ENCODE measurements at regions of chr16 and their contacts with region 1.

Region 1: GRCh38 chr16:13919683-13920509 is at the start of gene ERCC4:
- DNase-seq: peak; percentile 97 to 99
- H3K4me3 ChIP-seq: peak within 1 kb of the TSS; percentile 85
- H3K4me1 ChIP-seq: peaks cover 15% of the 10 kb centered on the region
- H3K27me3 ChIP-seq: no peaks in the 10 kb centered on the region

Region 2: DNA sequence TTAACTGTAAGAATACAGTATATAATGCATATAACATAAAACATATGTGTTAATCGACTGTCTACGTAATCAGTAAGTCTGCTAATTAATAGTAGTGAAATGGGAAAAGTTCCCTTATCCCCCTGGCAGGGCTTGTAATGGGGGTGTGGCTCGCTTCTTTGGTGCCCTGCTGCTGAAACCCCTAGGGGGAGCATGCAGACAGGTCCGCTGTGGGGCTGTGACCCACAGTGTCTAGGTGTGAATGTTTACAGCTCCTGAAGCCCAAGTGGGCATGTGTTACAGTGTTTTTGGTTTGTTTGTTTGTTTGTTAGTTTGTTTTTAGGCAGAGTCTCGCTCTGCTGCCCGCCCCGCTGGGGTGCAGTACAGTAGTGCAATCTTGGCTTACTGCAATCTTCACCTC is 522.8 kb before region 1 on chr16:
- in situ Hi-C with region 1: no loop called
- DNase-seq: no peak
- H3K4me3 ChIP-seq: no peak overlapping the region
- H3K4me1 ChIP-seq: no peaks in the 10 kb centered on the region
- H3K27me3 ChIP-seq: no peaks in the 10 kb centered on the region

Region 3: GRCh38 chr16:14289706-14290353 is 369.9 kb after region 1 on chr16:
- in situ Hi-C with region 1: loop called (anchors 5 kb)
- DNase-seq: peak; percentile 41 to 60
- H3K4me3 ChIP-seq: no peak overlapping the region
- H3K4me1 ChIP-seq: peaks cover 6% of the 10 kb centered on the region
- H3K27me3 ChIP-seq: no peaks in the 10 kb centered on the region

Region 4: DNA sequence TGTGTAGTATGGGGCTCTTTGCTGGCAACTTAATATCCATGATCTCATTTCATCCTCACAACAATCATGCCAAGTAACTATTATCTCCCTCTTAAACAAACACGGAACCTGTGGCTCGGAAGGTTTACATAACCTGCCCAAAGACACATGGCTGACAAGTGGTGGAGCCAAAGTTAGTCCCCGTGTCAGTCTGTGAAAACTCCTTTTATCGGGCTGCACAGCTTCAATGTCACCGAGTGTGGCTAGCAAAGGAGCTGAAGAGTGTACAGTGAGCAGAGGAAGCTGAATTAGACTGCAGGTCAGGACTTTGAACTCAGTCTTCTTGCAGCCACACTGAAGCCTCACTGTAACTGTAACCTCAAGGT is 629.9 kb after region 1 on chr16:
- in situ Hi-C with region 1: loop called (anchors 10 kb)
- DNase-seq: no peak
- H3K4me3 ChIP-seq: no peak overlapping the region
- H3K4me1 ChIP-seq: peaks cover 19% of the 10 kb centered on the region
- H3K27me3 ChIP-seq: no peaks in the 10 kb centered on the region

Measured in HAP-1 (cell line).